Mucosa of descending colon (tissue), 3 donors: ENCODE measurements at regions of chr17 and their contacts with region 1.

Region 1: GRCh38 chr17:59220376-59221158 is at the start of gene GDPD1:
- DNase-seq: peak; percentile 97 to 98 (median 98)
- ATAC-seq: peak; percentile 99
- H3K4me3 ChIP-seq: peak within 1 kb of the TSS; percentile 70
- H3K4me1 ChIP-seq: peaks cover 2% of the 10 kb centered on the region
- CTCF ChIP-seq: peak; percentile 83
- total RNA-seq, gene GDPD1: 4.5 to 6.2 (median 4.9) TPM

Region 2: DNA sequence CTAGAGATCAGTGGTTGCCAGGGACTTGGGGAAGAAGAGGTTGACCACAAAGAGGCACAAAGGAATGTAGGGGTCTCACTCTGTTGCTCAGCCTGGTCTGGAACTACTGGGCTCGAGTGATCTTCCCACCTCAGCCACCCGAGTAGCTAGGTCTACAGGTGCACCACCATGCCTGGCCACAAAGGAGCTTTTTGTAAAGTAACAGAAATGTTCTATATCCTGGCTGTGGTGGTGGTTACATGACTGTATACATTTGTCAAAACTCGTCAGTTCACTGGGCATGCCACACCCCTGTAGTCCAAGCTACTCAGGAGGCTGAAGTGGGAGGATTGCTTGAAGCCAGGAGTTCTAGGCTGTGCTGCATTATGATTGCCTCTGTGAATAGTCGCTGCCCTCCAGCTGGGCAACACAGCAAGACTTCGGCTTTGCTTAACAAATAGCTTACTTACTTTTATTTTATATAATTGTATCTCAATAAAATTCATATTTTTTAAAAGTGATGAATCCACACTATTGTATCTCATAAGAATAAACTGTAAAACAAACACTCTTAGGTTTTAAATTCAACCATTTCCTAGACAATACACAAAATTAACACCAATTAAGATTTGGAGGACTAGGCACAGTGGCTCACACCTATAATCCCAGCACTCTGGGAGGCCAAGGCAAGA is 70.6 kb before region 1 on chr17:
- intact Hi-C with region 1: no loop called
- DNase-seq: no peak
- ATAC-seq: no peak
- H3K4me3 ChIP-seq: no peak overlapping the region
- H3K4me1 ChIP-seq: no peaks in the 10 kb centered on the region
- CTCF ChIP-seq: no peak

Region 3: DNA sequence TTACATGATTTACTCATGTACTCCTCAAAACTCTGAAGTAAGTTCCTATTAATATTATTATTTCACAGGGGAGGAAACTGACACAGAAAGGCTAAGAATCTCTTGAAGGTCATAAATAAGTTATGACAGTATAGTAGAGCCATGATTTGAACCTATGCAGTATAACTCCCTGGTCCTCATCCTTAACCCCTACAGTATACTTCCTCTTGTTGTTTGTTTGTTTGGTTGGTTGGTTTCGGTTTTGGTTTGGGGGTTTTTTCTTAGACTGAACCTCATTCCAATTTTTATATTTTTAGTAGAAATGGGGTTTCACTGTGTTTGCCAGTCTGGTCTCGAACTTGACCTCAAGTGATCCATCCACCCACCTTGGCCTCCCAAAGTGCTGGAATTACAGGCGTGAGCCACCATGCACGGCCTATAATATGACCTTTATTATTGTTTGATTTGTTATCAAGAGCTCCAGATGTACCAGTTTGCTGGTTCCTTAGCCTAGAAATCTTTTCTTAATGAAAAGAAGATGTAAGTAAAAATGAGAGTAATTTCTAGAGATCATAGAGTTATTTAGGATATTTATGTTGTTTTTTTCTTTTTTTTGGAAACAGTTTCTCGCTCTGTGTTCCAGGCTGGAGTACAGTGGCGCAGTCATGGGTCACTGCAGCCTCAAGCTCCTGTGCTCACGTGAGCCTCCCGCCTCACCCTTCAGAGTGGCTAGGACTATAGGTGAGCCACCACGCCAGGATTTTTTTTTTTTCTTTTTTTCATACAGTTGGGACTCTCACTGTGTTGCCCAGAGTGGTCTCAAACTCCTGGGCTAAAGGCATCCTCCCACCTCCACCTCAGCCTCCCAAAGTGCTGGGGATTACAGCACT is 60.2 kb before region 1 on chr17:
- intact Hi-C with region 1: no loop called
- DNase-seq: no peak
- ATAC-seq: no peak
- H3K4me3 ChIP-seq: no peak overlapping the region
- H3K4me1 ChIP-seq: peaks cover 8% of the 10 kb centered on the region
- CTCF ChIP-seq: no peak

Region 4: DNA sequence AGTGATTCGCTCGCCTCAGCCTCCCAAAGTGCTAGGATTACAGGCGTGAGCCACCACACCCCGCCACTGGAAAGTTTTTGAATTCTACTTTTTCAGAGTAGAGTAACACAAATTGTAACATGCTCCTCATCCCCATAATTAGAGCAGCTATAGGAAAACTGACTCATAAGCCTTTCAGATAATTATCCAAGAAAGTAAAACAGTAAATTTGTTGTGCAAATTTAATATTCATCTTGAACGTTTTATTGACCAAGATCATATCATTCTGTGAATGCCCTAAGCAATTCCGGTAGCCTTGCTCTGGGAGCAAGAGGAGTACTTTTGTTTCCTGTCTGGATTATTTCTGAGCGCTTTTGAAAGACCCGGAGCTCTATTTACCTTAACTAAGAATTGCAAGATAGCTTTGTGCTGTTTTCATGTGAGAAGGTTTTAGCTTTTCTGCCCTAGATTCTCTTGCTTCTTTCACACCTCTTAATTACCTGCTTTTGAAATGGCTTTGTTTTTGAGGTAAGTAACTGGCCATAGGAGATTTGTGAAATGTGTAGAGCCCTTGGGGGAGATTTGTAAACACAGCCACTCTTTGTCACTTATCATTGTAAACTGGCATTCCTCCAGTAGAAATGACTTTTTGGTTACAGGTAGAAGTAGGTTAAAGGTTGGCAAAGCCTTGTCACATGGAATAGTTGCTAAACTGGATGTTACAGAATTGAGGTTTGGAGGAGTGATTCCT is 76.4 kb after region 1 on chr17:
- intact Hi-C with region 1: loop called in 1 of 2 experiments (anchors 5 kb)
- DNase-seq: no peak
- ATAC-seq: peak; percentile 59
- H3K4me3 ChIP-seq: no peak overlapping the region
- H3K4me1 ChIP-seq: peaks cover 29% of the 10 kb centered on the region
- CTCF ChIP-seq: no peak

Region 5: GRCh38 chr17:59372138-59372857 is 151.7 kb after region 1 on chr17:
- intact Hi-C with region 1: no loop called
- DNase-seq: peak in 1 of 3 donors; percentile 75
- ATAC-seq: peak; percentile 83
- H3K4me3 ChIP-seq: no peak overlapping the region
- H3K4me1 ChIP-seq: peaks cover 69% of the 10 kb centered on the region
- CTCF ChIP-seq: no peak